AG04449 (cell line): ENCODE measurements at regions of chr1 and their contacts with region 1.

Region 1: DNA sequence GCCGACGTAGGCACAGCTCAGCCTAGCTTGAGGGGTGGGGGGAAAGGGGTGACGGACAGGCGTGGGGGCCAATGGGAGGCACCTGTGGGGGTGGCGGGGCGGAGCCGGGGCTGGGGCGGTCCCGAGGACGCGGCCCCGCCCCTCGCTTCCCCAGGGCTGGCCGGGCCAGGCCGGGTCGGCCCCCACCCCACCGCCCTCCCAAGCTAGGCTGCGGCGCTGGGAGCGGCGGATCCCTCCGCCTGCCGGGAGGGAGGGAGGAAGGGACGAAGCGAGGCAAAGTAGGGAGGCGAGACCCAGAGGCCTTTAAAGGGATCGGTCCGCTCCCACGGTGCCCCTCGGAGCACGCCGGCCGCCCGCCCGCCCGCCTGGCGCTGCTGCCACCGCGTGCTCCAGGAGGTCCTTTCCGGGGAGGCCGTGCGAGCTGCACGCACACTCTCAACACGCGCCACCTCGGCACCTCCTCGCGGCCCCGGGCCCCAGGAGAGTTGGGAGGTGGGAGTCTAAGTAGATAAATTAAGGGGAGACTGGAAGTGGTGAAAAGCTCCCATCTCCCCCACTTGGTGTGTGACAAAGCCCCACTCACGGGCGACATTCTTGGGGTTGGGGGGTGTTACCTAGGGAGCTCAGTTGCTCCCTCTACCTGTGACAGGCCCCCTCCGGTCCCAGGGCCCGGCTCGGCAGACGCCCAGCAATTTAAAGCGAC is 373 bp upstream of the MEF2D start:
- DNase-seq: peak; percentile 63
- H3K4me3 ChIP-seq: peak overlapping the region; percentile 96
- CTCF ChIP-seq: peak; percentile 52

Region 2: DNA sequence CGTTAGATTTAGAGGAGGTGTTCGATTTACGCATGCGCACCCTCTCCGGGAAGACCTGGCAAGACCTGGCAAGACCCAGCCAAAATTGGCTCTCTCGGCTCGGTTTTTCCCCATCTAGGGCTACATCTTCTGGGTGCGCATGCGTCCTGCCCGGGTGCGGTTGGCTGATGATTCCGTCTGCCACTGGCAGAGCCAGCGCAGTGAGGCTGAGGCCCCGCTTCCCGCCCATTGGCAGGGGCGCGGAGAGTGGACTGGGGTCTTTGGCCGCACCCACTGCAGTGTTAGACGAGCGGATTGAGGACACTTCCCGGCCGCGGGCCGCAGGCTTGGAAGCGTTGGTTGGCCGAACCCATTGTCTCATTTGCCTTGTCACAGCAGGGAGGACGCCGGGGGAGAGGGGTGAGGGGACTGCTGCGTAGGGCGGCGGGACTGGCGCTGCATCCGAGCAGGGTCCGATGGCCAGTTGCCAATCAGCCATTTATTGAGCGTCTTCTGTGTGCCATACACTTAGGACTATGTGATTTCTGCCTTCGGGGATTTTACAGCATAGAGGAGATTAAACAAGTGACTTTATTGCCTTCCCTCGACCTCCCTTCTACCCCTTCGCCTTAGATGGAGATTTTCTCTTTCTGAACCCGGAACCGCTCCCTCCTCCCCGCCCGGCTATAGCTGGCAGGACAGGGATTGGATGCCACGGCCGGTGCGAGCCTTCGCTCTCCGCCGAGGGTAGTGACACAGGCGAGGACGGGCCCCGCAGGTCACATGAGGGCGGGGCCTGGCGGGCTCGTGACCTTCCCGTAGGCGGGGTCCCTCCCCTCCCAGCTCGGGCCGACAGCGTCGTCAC is 44.1 kb before region 1 on chr1:
- CTCF ChIA-PET with region 1: interaction called, 4 read pairs
- POLR2A ChIA-PET with region 1: interaction called, 11 read pairs
- DNase-seq: peak; percentile 87
- H3K4me3 ChIP-seq: peak overlapping the region; percentile 64
- CTCF ChIP-seq: no peak

Region 3: DNA sequence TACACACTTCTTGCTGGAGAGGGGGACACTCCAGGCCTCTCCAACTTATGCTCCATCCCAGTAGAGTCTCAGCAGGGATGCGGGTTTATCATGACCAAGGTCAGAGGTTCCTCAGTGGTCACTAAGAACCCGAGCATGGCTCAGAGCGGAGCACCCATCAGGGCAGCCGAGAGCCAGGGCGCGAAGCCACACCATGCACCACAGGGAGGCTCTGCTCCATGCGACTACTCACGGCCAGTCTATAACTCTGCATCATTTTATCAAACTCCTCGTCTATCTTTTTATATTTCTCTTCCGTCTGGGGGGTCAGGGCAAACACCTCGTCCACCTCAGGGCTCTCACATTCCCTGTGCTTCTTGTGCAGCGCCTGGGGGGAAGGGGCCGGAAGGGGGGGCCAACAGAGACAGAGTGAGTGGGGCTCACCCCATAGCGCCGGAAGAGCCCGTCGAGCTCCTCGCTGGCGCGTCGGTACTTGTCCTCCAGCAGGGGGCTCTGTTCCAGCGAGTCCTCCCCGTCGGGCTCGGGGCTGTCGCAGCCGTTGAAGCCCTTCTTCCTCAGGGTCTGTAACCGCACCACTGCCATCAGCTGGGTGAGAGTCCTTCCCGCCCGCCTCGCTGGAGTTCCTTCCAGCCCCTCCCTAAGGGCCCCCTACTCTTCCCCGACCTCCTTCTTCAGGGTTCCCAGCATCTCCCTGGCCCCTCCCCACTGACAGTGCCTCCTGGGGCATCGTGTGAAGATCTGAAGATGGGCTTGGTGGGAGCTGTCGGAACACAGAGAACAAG is 20.3 kb before region 1 on chr1:
- CTCF ChIA-PET with region 1: interaction called, 270 read pairs
- POLR2A ChIA-PET with region 1: interaction called, 4 read pairs
- DNase-seq: no peak
- H3K4me3 ChIP-seq: no peak overlapping the region
- CTCF ChIP-seq: peak; percentile 84

Region 4: GRCh38 chr1:156489166-156489934 is 11.6 kb before region 1 on chr1:
- CTCF ChIA-PET with region 1: interaction called, 270 read pairs
- POLR2A ChIA-PET with region 1: interaction called, 31 read pairs
- DNase-seq: no peak
- H3K4me3 ChIP-seq: no peak overlapping the region
- CTCF ChIP-seq: peak; percentile 25